Activated CD4-positive, alpha-beta memory T cell treated with anti-CD3 and anti-CD28 coated beads, Interleukin-2, amount 10 ng/mL, durations not matched to agents 7 days and 5 days (primary cell): ENCODE measurements at regions of chr9 and their contacts with region 1.

Region 1: DNA sequence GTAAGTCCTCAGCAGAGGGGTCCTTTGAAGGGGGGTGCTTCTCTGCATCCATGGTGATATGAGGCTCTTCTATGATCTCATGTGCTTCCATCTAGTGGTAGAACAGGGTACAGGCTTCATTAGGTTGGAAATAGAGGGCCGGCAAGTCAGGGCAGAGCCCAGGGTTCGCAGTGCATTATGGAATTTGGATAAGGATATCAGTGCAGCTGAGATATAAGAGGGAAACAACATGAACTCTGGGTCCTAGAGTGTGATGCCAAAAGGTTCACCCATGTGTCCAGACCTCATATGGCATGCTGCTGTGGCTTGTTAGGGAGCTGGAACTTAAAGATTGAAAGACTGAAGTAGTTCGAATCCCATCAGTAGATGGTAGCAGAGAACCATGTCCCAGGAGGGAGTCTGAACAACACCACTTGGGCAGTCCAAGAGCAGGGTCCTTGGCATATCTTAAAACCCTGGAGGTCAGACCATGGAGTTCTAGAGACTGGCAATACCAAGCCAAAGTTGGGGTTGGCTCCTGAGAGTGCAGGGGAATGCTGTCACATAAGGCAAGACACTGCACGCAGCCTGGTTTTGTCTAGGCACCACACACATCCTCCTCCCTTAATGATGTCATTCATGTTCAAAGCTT is 2.3 kb downstream of the FAM221B start:
- DNase-seq: peak; percentile 31
- H3K4me3 Mint-ChIP-seq: no peak overlapping the region
- H3K27ac Mint-ChIP-seq: no peak overlapping the region
- H3K4me1 Mint-ChIP-seq: peaks cover 23% of the 10 kb centered on the region
- H3K27me3 Mint-ChIP-seq: peaks cover 9% of the 10 kb centered on the region

Region 2: GRCh38 chr9:35814841-35815543 is 11.2 kb before region 1 on chr9 and contains the start of gene HINT2:
- CTCF ChIA-PET with region 1: interaction called, 14 read pairs
- POLR2A ChIA-PET with region 1: interaction called, 9 read pairs
- DNase-seq: peak; percentile 99
- H3K4me3 Mint-ChIP-seq: peak within 1 kb of the TSS; percentile 87
- H3K27ac Mint-ChIP-seq: peak within 1 kb of the TSS; percentile 92
- H3K4me1 Mint-ChIP-seq: peaks cover 45% of the 10 kb centered on the region
- H3K27me3 Mint-ChIP-seq: peaks cover 4% of the 10 kb centered on the region
- total RNA-seq, gene HINT2: 77.8 to 79.2 TPM

Region 3: GRCh38 chr9:35882263-35882848 is 56.2 kb after region 1 on chr9:
- CTCF ChIA-PET with region 1: interaction called, 13 read pairs
- POLR2A ChIA-PET with region 1: no interaction called
- DNase-seq: peak; percentile 80
- H3K4me3 Mint-ChIP-seq: no peak overlapping the region
- H3K27ac Mint-ChIP-seq: no peak overlapping the region
- H3K4me1 Mint-ChIP-seq: no peaks in the 10 kb centered on the region
- H3K27me3 Mint-ChIP-seq: peaks cover 29% of the 10 kb centered on the region